PC-9 (cell line): ENCODE measurements at regions of chr14 and their contacts with region 1.

Region 1: GRCh38 chr14:92224358-92224954 is 98.5 kb upstream of the SLC24A4 start:
- DNase-seq: peak in 1 of 2 experiments; percentile 46
- H3K4me3 ChIP-seq: no peak overlapping the region
- H3K27ac ChIP-seq: no peak overlapping the region
- H3K4me1 ChIP-seq: peaks cover 4% of the 10 kb centered on the region; the same call in 1 of the 2 replicates
- H3K27me3 ChIP-seq: no peaks in the 10 kb centered on the region
- CTCF ChIP-seq: no peak

Region 2: GRCh38 chr14:92209141-92209540 is 15.3 kb before region 1 on chr14:
- CTCF ChIA-PET with region 1: no interaction called
- POLR2A ChIA-PET with region 1: no interaction called
- intact Hi-C with region 1: no loop called
- DNase-seq: no peak
- H3K4me3 ChIP-seq: no peak overlapping the region
- H3K27ac ChIP-seq: no peak overlapping the region
- H3K4me1 ChIP-seq: no peaks in the 10 kb centered on the region
- H3K27me3 ChIP-seq: peaks cover 3% of the 10 kb centered on the region; the same call in 1 of the 2 replicates
- CTCF ChIP-seq: no peak

Region 3: GRCh38 chr14:92280554-92281262 is 56.3 kb after region 1 on chr14:
- CTCF ChIA-PET with region 1: no interaction called
- POLR2A ChIA-PET with region 1: no interaction called
- intact Hi-C with region 1: no loop called
- DNase-seq: no peak
- H3K4me3 ChIP-seq: no peak overlapping the region
- H3K27ac ChIP-seq: no peak overlapping the region
- H3K4me1 ChIP-seq: no peaks in the 10 kb centered on the region
- H3K27me3 ChIP-seq: peaks cover 2% of the 10 kb centered on the region
- CTCF ChIP-seq: no peak

Region 4: GRCh38 chr14:92577321-92577742 is 352.9 kb after region 1 on chr14:
- CTCF ChIA-PET with region 1: no interaction called
- POLR2A ChIA-PET with region 1: interaction called, 11 read pairs
- intact Hi-C with region 1: no loop called
- DNase-seq: no peak
- H3K4me3 ChIP-seq: no peak overlapping the region
- H3K27ac ChIP-seq: no peak overlapping the region
- H3K4me1 ChIP-seq: no peaks in the 10 kb centered on the region
- H3K27me3 ChIP-seq: no peaks in the 10 kb centered on the region
- CTCF ChIP-seq: no peak